H1 (cell line): ENCODE measurements at regions of chr11 and their contacts with region 1.

Region 1: DNA sequence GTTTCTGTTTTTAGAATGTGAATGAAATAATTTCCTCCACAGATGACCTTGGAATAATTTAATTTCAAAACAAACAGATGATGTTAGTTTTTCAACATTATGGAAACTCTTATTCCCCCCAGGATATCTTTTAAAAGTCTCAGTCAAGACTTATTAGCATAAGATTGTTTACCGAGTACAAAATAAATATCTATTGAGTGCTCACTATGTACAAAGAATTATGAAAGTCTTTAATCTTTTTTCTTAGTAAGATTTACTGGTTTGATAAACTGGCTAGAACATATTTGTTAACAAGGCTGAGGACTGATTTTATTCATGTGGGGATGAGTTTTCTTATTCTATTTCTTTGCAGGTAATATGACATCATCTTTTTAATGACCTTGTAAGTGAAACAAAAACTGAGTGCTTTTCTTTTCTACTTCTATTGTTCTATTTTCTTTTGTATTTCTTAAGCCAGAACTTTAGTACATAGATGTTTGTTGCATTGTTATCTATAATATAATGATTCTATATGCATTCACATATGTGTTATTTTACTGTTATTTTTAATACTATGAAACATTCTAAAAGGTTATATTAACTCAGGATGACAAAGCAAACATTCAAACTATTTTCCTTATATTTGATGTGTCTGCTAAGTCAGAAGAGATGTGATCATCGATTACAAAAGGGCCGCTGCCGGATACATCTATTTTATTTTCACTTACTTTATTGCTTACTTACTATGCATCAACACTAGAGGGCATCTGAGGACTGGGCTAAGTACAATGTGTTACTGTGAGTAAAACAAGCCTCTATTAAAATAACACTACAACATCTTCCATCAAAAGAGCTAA is 111.0 kb upstream of the ARHGAP42 start:
- DNase-seq: no peak
- H3K4me3 ChIP-seq: no peak overlapping the region
- H3K27ac ChIP-seq: no peak overlapping the region
- H3K4me1 ChIP-seq: no peaks in the 10 kb centered on the region; a peak in 1 of 7 replicates
- H3K27me3 ChIP-seq: no peaks in the 10 kb centered on the region
- CTCF ChIP-seq: peak in 2 of 3 experiments; percentile 57 to 66; a peak in 2 of 4 replicates
- EP300 ChIP-seq: no peak
- POLR2A ChIP-seq: no peak
- RAD21 ChIP-seq: peak; percentile 93 to 97

Region 2: DNA sequence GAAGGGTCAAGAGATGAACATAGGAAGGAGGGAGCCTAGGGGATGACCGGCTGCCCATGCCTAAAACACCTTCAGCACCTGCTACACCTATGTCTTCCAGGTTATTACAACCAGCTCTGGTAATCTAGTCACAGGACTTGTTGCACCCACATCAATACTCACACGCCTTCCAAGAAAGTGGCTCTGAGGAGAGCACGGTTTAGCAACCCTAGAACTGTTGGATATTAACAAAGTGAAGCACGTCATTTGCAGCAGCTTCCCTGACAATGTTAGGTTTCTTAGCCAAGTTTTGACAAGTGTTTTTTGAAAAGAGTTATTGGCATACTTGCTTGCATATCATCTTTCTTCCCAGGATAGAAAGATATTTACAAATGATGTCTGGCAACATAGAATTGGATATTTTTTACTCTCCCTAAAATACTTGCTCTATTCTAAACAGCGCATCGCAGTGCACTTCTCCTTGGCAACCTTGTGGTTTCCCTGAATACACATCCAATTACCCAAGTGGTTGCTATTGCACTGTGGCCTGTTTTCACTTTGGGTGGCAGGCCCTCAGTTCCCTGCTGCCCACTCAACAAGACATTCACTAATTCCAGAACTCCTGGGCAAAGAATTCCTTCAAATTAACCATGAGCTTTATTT is 16.7 kb after region 1 on chr11:
- CTCF ChIA-PET with region 1: interaction called, 13 read pairs
- POLR2A ChIA-PET with region 1: no interaction called
- DNase-seq: no peak
- H3K4me3 ChIP-seq: no peak overlapping the region
- H3K27ac ChIP-seq: no peak overlapping the region
- H3K4me1 ChIP-seq: no peaks in the 10 kb centered on the region
- H3K27me3 ChIP-seq: no peaks in the 10 kb centered on the region
- CTCF ChIP-seq: no peak
- EP300 ChIP-seq: no peak
- POLR2A ChIP-seq: no peak
- RAD21 ChIP-seq: no peak

Region 3: GRCh38 chr11:100681064-100681502 is 105.0 kb after region 1 on chr11:
- CTCF ChIA-PET with region 1: interaction called, 14 read pairs
- POLR2A ChIA-PET with region 1: no interaction called
- DNase-seq: no peak
- H3K4me3 ChIP-seq: no peak overlapping the region
- H3K27ac ChIP-seq: no peak overlapping the region
- H3K4me1 ChIP-seq: peaks cover 2 to 8% (median 4%) of the 10 kb centered on the region in 4 experiments; a peak in 5 of 7 replicates
- H3K27me3 ChIP-seq: no peaks in the 10 kb centered on the region
- CTCF ChIP-seq: no peak
- EP300 ChIP-seq: no peak
- POLR2A ChIP-seq: no peak
- RAD21 ChIP-seq: no peak

Region 4: GRCh38 chr11:100816823-100817222 is 240.7 kb after region 1 on chr11:
- CTCF ChIA-PET with region 1: interaction called, 10 read pairs
- POLR2A ChIA-PET with region 1: no interaction called
- DNase-seq: no peak
- H3K4me3 ChIP-seq: no peak overlapping the region
- H3K27ac ChIP-seq: no peak overlapping the region
- H3K4me1 ChIP-seq: peaks cover 0 to 9% (median 2%) of the 10 kb centered on the region in 4 experiments; a peak in 4 of 7 replicates
- H3K27me3 ChIP-seq: peaks cover 0 to 1% (median 0%) of the 10 kb centered on the region in 4 experiments; a peak in 1 of 7 replicates
- CTCF ChIP-seq: no peak
- EP300 ChIP-seq: no peak
- POLR2A ChIP-seq: no peak
- RAD21 ChIP-seq: no peak

Region 5: DNA sequence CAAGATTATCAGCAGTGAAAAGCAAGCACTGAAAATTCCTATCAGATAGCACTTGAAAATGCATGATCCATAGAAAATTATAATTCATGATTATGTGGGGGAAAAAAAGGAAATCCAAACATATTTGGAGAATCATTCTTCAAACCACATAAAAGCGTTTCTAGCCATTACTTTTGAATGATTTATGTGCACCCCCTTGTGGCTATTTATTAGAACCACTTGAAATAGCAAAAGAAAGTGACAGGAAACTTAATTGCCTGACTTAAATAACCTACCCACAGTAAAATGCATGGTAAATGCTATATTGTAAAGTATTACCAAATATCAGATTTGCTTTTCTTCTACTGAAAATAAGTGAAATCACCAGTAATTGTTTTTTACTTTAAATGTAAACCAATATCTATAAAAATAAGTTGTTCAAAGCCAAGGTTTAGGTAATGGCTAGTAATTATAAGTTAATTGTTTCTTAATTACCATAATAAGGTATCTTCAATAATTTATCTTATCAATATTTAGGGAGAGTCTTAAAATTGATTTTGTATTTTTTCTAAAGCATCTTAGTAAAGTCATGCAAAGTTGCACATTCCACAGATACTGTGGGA is 279.5 kb after region 1 on chr11:
- CTCF ChIA-PET with region 1: interaction called, 18 read pairs
- POLR2A ChIA-PET with region 1: no interaction called
- DNase-seq: no peak
- H3K4me3 ChIP-seq: no peak overlapping the region
- H3K27ac ChIP-seq: no peak overlapping the region
- H3K4me1 ChIP-seq: peaks cover 0 to 15% (median 10%) of the 10 kb centered on the region in 4 experiments; a peak in 4 of 7 replicates
- H3K27me3 ChIP-seq: no peaks in the 10 kb centered on the region
- CTCF ChIP-seq: peak in 2 of 3 experiments; percentile 10 to 53; a peak in 2 of 4 replicates
- EP300 ChIP-seq: no peak
- POLR2A ChIP-seq: no peak
- RAD21 ChIP-seq: peak; percentile 70 to 81

Region 6: DNA sequence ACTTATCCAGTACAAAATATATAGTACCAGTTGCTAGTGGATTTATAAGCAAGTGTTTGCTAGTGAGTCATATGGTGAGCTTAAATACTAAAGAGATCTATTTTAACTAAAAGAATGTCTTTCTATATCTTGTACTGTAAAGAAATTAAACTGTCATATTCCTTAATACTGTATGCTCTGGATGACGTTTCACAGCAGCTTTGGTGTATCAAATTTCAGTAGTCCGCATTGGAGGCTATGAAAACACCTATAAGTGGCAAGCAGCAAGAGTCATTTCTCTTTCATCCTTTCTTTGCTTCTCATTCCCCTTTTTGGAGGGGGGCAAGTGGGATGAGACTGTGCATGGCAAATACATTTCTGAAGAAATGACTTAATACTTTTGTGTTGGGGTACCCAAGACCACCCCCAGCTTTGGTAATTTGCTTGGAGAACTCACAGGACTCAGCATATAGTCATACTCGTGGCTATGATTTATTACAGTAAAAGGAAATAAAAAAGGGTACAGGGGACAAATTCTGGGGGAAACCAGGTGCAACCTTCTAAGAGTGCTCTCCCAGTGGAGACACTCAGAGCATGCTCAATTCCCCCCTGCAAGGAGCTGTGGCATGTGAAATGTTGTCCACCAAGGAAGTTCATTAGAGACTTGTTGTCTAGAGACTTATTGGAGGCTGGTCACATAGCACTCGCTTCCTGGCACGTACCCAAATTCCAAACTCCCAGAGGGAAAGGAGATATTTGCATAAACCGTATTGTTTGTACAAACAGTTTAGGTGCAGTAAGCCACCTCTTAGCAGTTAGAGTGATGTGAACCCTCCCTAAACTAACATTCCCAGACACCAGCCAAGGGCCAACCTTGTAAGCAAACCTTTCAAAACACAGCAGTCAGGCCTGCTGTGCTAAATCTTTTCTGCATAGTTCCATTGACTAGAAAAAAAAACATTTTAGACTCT is 342.7 kb after region 1 on chr11:
- CTCF ChIA-PET with region 1: interaction called, 12 read pairs
- POLR2A ChIA-PET with region 1: no interaction called
- DNase-seq: no peak
- H3K4me3 ChIP-seq: no peak overlapping the region
- H3K27ac ChIP-seq: no peak overlapping the region
- H3K4me1 ChIP-seq: peaks cover 0 to 4% (median 0%) of the 10 kb centered on the region in 4 experiments; a peak in 1 of 7 replicates
- H3K27me3 ChIP-seq: no peaks in the 10 kb centered on the region
- CTCF ChIP-seq: no peak
- EP300 ChIP-seq: no peak
- POLR2A ChIP-seq: no peak
- RAD21 ChIP-seq: no peak

Region 7: DNA sequence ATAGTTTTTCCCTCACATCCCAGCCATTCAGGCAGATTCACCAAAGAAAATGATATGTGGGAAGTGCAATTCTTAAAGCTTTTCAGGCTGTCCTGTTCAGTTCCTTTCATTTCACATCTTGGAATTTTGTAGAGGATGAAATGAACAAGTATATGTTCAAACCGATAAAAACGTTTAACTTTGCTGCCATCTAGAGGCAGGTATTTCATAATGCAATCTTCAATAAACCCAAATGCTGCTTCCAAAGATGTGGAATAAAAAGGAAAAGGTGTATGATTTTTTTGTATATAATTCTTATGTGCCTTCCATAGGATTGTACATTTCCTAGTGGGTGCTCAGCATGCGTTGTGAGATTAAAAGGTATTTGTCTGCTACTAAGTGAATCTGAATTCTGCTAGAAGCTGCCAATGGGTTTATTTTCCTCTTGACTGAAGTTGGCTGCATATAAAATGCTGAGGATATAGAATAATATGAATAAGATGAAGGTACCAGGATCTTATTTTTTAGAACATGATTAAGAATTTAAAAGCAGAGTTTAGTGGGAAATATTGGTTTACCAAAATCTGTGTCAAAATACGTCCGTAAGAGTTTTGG is 354.2 kb after region 1 on chr11:
- CTCF ChIA-PET with region 1: interaction called, 45 read pairs
- POLR2A ChIA-PET with region 1: interaction called, 5 read pairs
- DNase-seq: no peak
- H3K4me3 ChIP-seq: no peak overlapping the region
- H3K27ac ChIP-seq: no peak overlapping the region
- H3K4me1 ChIP-seq: no peaks in the 10 kb centered on the region
- H3K27me3 ChIP-seq: no peaks in the 10 kb centered on the region
- CTCF ChIP-seq: peak in 1 of 3 experiments; percentile 37; a peak in 2 of 4 replicates
- EP300 ChIP-seq: no peak
- POLR2A ChIP-seq: no peak
- RAD21 ChIP-seq: peak; percentile 60 to 69